ENCODE measurements at regions of chr17 and their contacts with region 1.

Region 1: GRCh38 chr17:46811978-46812583 is 6.4 kb downstream of the WNT3 start:
- DNase-seq: peak; percentile 20
- H3K4me3 ChIP-seq: no peak overlapping the region
- H3K27ac ChIP-seq: no peak overlapping the region
- H3K4me1 ChIP-seq: no peaks in the 10 kb centered on the region
- H3K27me3 ChIP-seq: no peaks in the 10 kb centered on the region
- CTCF ChIP-seq: no peak

Region 2: DNA sequence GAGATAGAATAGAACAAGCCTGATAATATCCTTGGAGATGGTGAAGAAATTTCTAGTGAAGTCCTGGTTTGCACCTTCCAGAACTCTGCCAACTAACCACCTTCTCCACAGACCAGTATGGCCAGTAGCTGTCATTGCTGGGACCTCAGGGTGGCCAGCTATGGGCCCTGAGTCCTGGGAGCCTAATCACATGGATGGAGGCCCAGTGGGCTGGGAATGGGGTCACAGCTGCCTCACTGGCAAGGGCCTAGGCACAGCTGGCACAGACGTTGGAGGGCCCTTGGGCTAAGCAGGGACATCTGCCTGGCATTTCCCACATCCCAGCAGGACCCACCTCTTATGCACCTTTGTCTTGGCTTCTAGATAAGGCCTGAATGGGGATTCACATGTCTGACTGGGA is 14.0 kb after region 1 on chr17:
- CTCF ChIA-PET with region 1: no interaction called
- dilution Hi-C with region 1: no loop called
- in situ Hi-C with region 1: no loop called
- intact Hi-C with region 1: loop called (anchors 2 kb)
- DNase-seq: no peak
- H3K4me3 ChIP-seq: no peak overlapping the region
- H3K27ac ChIP-seq: no peak overlapping the region
- H3K4me1 ChIP-seq: no peaks in the 10 kb centered on the region
- H3K27me3 ChIP-seq: peaks cover 1% of the 10 kb centered on the region
- CTCF ChIP-seq: no peak